Testis (tissue), 5 donors: ENCODE measurements at regions of chr1 and their contacts with region 1.

Region 1: GRCh38 chr1:241834733-241835377 is 13.1 kb upstream of the EXO1 start:
- DNase-seq: no peak
- H3K4me3 ChIP-seq: no peak overlapping the region
- H3K27ac ChIP-seq: no peak overlapping the region
- H3K4me1 ChIP-seq: no peaks in the 10 kb centered on the region
- H3K27me3 ChIP-seq: no peaks in the 10 kb centered on the region
- CTCF ChIP-seq: peak; percentile 64 to 72 (median 70)
- POLR2A ChIP-seq: no peak

Region 2: DNA sequence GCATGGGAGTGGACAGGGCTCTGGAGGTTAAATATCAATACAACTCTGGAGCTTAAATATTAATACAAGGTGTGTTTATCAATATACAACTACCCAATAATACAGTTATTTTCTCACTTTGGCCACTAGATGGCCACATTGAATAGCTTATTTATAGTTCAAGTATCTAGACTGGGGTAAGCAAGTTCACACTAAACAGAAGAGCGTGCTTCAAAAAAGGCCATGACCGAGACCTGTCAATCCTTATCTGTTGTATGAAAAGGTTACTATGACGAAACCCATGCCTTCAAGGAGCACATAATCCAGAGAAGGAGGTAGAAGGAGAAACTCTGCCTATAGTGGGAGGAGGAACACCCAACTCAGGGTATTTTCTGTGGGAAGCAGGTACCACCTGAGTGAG is 223.8 kb before region 1 on chr1:
- intact Hi-C with region 1: loop called (anchors 10 kb)
- DNase-seq: no peak
- H3K4me3 ChIP-seq: no peak overlapping the region
- H3K27ac ChIP-seq: no peak overlapping the region
- H3K4me1 ChIP-seq: peaks cover 7% of the 10 kb centered on the region
- H3K27me3 ChIP-seq: no peaks in the 10 kb centered on the region
- CTCF ChIP-seq: peak; percentile 54 to 76 (median 76)
- POLR2A ChIP-seq: no peak

Region 3: DNA sequence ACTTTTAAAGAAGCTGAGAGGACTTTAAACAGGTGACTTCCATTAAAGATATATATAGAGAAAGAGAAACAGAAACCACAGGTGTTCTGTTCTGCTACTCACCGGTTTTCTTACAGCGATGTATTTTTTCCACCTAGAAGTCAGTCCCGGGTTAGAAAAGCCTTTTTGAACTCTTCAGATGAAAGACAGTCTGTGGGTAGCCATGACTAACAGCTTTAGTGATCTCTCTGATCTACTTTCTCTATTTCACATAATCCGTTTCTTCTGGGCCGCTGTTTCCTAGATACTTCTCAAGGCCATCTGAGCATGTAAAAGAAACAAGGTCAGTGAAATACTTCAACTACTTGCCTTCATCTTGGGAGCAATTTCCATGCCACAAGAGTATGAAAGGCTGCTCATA is 157.7 kb before region 1 on chr1:
- intact Hi-C with region 1: no loop called
- DNase-seq: no peak
- H3K4me3 ChIP-seq: no peak overlapping the region
- H3K27ac ChIP-seq: peak overlapping the region; percentile 7 to 18
- H3K4me1 ChIP-seq: no peaks in the 10 kb centered on the region
- H3K27me3 ChIP-seq: no peaks in the 10 kb centered on the region
- CTCF ChIP-seq: no peak
- POLR2A ChIP-seq: no peak